Lower leg skin (tissue), 4 donors: ENCODE measurements at regions of chr1 and their contacts with region 1.

Region 1: GRCh38 chr1:210490781-210491180 is 162.1 kb downstream of the HHAT start:
- DNase-seq: no peak
- H3K4me3 ChIP-seq: no peak overlapping the region
- CTCF ChIP-seq: no peak
- POLR2A ChIP-seq: no peak

Region 2: DNA sequence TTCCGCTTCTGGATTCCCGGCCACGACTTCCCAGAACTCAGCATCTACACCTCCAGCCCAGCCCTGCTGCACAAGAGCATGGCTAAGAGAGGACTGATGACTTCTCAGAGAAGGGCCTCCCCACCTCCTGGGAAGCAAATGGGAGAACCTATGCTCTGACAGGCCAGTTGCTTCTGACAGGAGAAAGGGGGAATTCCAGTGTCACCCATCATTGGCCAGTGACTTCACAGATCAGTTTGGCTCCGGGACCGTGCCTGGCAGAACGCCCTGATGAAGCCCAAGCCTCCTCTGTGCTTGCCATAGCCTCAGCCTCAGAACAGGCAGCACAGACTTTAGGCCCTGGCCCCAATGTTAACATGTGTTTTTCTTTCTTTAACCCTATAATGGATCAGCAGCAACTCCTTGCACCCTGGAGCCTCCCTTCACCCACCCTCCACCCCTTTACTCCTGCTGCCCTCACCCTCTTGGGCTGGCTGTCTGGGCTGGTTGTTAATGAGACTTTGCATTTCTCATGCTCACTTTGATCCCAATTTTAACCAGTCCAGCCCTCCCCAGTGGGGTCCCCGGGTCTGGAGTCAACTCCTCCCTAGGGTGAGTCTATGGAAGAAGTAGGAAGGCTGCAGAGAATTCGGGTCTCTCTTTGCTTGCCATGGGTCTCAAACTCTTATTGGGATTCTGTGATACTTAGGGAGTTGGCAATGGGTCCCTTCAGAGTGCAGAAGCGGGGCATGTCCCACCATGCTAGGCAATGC is 1130.8 kb after region 1 on chr1:
- intact Hi-C with region 1: loop called (anchors 5 kb)
- DNase-seq: no peak
- H3K4me3 ChIP-seq: no peak overlapping the region
- CTCF ChIP-seq: no peak
- POLR2A ChIP-seq: no peak